Natural killer cell (primary cell): ENCODE measurements at regions of chr7 and their contacts with region 1.

Region 1: DNA sequence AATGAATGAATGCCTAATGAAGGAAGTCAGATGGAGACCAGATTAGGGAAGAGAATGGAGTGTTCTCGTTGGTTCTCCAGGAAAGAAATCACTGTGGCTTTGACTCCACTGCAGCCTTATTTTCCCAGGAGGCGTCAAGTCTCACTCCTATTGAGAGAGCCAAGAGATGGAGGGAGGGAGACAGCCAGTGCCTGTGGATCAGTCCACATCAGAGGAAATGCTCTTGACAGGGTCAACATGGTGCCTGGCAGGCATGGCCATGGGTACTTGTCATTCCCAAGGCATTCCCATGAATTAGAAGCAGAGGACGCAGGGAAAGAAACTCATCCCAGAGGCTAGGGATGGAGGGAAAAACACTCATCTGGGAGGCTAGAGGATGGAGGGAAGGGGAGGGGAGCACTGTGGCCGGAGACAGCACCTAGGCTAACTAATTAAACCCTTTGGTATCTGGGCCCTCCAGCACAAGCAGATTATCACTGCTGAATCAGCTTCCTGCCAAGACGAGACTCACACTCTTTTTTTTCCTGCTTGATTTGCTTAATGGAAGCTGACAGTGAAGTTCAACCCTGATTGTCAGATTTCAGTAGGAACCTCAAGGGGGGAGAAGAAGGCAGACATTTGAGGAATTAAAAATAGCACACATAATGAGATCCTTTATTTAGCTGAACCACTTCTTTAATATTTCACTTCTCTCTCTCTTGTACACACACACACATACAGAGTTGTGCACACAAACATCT is 1233.2 kb upstream of the AUTS2 start:
- DNase-seq: no peak
- ATAC-seq: no peak
- H3K4me3 ChIP-seq: no peak overlapping the region
- H3K4me3 Mint-ChIP-seq: no peak overlapping the region
- H3K27ac ChIP-seq: no peak overlapping the region
- H3K27ac Mint-ChIP-seq: no peak overlapping the region
- H3K4me1 ChIP-seq: no peaks in the 10 kb centered on the region
- H3K4me1 Mint-ChIP-seq: no peaks in the 10 kb centered on the region
- H3K27me3 ChIP-seq: no peaks in the 10 kb centered on the region
- H3K27me3 Mint-ChIP-seq: no peaks in the 10 kb centered on the region
- CTCF ChIP-seq: no peak

Region 2: DNA sequence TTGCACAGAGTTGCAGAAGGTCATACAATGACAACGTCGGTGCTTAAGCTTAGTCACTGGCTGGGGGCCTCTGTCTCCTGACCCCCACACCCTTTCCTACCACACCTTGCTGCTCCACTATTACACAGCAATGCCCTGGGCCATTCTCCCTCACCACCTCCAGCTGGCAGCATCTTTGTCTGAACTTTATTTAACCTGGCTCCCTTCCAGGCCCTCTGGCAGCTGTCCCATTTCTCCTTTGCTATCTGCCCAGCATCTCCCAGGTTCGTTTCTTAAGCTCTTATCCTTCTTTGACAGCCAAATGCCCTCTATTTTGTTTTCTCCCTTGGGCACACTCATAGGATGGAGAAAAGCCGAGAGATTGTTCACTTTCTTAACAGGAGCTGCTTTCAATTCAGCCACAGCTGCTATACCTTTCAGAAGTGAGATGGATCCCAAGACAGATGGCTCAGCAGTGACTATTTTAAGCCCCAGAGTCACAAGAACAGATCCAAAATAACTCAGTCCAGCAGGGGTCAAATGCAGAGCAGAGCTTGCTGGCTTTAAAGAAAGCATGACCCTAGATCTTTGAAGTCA is 43.9 kb before region 1 on chr7:
- intact Hi-C with region 1: loop called (anchors 1 kb)
- DNase-seq: no peak
- ATAC-seq: no peak
- H3K4me3 ChIP-seq: no peak overlapping the region
- H3K4me3 Mint-ChIP-seq: no peak overlapping the region
- H3K27ac ChIP-seq: no peak overlapping the region
- H3K27ac Mint-ChIP-seq: no peak overlapping the region
- H3K4me1 ChIP-seq: no peaks in the 10 kb centered on the region
- H3K4me1 Mint-ChIP-seq: no peaks in the 10 kb centered on the region
- H3K27me3 ChIP-seq: no peaks in the 10 kb centered on the region
- H3K27me3 Mint-ChIP-seq: no peaks in the 10 kb centered on the region
- CTCF ChIP-seq: no peak

Region 3: DNA sequence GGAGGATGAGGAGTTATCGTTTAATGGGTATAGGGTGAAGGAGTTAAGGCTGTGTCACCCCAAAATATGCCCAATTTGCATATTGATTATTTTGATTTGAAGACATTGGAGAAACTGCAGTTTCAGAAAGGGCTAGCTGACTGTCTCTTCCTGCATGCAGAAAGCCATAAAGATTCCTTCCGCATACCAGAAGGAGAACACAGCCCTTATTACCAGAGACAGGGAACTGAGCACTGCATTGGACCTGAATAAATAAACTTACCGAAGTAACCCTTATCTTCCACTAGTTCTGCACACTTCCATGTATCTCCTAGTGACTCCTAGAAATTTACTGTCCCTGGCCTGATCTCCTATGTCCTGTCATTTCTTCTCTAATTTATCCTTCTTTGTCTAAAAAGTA is 411.3 kb after region 1 on chr7:
- intact Hi-C with region 1: no loop called
- DNase-seq: no peak
- ATAC-seq: no peak
- H3K4me3 ChIP-seq: no peak overlapping the region
- H3K4me3 Mint-ChIP-seq: no peak overlapping the region
- H3K27ac ChIP-seq: no peak overlapping the region
- H3K27ac Mint-ChIP-seq: no peak overlapping the region
- H3K4me1 ChIP-seq: no peaks in the 10 kb centered on the region
- H3K4me1 Mint-ChIP-seq: no peaks in the 10 kb centered on the region
- H3K27me3 ChIP-seq: no peaks in the 10 kb centered on the region
- H3K27me3 Mint-ChIP-seq: no peaks in the 10 kb centered on the region
- CTCF ChIP-seq: no peak